ENCODE measurements at regions of chr10 and their contacts with region 1.

Region 1: DNA sequence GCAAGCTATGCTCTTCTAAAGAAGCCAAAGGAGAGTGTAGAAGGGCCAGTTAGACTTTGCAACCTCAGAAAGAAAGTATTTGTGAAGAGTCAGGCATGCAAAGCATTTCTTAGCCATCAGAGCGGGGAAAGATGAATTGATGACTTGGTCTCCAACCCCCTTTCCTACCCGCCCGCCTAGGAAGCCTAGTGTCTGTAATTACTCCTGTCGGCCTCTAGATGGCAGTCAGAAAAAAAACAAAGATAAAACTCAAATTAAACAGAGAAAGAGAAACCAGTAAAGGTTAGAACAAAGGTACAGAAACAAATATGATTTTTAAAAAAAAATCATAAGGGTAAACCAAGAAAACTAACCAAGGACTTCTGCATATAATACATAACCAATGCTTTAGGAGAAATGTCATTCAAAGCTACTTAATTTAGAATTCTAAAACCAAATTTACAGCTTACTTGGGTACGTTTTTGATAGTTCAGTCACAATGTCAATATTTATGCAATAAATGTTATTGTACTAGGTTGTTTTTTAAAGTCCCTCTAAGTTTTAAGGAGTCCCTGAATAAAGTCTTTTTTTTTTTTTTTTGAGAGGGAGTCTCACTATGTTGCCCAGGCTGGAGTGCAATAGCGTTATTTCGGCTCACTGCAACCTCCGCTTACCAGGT is 97.6 kb downstream of the LYZL1 start:
- DNase-seq: no peak
- ATAC-seq: peak in 1 of 4 donors; percentile 47
- H3K4me3 ChIP-seq: no peak overlapping the region
- H3K27ac ChIP-seq: no peak overlapping the region
- H3K4me1 ChIP-seq: no peaks in the 10 kb centered on the region
- H3K27me3 ChIP-seq: peaks cover 0 to 2% (median 0%) of the 10 kb centered on the region in 9 donors
- CTCF ChIP-seq: peak; percentile 71 to 82 (median 76)
- POLR2A ChIP-seq: no peak

Region 2: DNA sequence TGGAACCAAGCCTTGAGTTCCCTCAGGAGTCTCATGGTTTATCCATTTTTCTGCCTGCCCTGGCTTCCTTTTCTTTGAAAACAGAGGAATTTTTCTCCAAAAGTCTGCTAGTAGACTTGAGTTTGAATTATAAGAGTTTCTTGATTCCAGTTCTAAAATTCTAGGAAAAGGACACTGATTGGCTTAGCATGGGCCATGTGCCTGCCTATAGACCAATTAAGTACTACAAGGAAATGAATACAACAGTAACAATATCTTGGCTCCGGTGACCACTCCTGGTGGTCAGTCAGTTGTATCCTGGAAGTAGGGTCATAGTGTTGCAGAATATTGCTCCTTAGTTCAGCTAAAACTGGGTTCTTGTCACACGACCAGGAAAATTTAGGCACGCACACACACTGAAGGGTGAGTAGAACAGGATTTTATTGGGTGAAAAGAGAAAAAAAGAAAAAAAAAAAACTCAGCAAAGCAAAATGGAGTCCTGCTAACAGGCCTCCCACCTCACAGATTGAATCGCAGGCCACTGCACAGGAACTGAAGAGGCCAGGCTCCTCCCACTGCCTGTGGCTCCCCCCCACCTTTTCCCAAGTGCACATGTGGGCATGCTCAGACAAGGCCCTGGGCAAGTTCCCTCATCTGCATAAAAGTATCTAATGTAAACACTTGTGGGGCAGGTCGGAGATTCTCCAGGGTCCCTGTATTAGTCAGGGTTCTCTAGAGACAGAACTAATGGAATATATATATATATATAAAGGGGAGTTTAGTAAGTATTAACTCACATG is 57.5 kb after region 1 on chr10:
- intact Hi-C with region 1: loop called in 7 of 10 experiments (anchors 2 to 10 kb)
- DNase-seq: no peak
- ATAC-seq: no peak
- H3K4me3 ChIP-seq: no peak overlapping the region
- H3K27ac ChIP-seq: no peak overlapping the region
- H3K4me1 ChIP-seq: peaks cover 0 to 19% (median 10%) of the 10 kb centered on the region in 12 donors
- H3K27me3 ChIP-seq: no peaks in the 10 kb centered on the region
- CTCF ChIP-seq: no peak
- POLR2A ChIP-seq: no peak

Region 3: GRCh38 chr10:29451946-29452345 is 65.5 kb after region 1 on chr10:
- intact Hi-C with region 1: loop called in 8 of 10 experiments (anchors 2 to 10 kb)
- DNase-seq: no peak
- ATAC-seq: no peak
- H3K4me3 ChIP-seq: no peak overlapping the region
- H3K27ac ChIP-seq: no peak overlapping the region
- H3K4me1 ChIP-seq: peaks cover 0 to 17% (median 8%) of the 10 kb centered on the region in 12 donors
- H3K27me3 ChIP-seq: no peaks in the 10 kb centered on the region
- CTCF ChIP-seq: no peak
- POLR2A ChIP-seq: no peak

Region 4: GRCh38 chr10:29496341-29497162 is 110.1 kb after region 1 on chr10:
- intact Hi-C with region 1: loop called in 1 of 10 experiments (anchors 2 kb)
- DNase-seq: peak; percentile 63 to 88 (median 65)
- ATAC-seq: peak in 3 of 4 donors; percentile 73 to 81 (median 79)
- H3K4me3 ChIP-seq: no peak overlapping the region
- H3K27ac ChIP-seq: no peak overlapping the region
- H3K4me1 ChIP-seq: peaks cover 0 to 4% (median 0%) of the 10 kb centered on the region in 12 donors
- H3K27me3 ChIP-seq: no peaks in the 10 kb centered on the region
- CTCF ChIP-seq: peak; percentile 81 to 95 (median 90)
- POLR2A ChIP-seq: no peak

Region 5: DNA sequence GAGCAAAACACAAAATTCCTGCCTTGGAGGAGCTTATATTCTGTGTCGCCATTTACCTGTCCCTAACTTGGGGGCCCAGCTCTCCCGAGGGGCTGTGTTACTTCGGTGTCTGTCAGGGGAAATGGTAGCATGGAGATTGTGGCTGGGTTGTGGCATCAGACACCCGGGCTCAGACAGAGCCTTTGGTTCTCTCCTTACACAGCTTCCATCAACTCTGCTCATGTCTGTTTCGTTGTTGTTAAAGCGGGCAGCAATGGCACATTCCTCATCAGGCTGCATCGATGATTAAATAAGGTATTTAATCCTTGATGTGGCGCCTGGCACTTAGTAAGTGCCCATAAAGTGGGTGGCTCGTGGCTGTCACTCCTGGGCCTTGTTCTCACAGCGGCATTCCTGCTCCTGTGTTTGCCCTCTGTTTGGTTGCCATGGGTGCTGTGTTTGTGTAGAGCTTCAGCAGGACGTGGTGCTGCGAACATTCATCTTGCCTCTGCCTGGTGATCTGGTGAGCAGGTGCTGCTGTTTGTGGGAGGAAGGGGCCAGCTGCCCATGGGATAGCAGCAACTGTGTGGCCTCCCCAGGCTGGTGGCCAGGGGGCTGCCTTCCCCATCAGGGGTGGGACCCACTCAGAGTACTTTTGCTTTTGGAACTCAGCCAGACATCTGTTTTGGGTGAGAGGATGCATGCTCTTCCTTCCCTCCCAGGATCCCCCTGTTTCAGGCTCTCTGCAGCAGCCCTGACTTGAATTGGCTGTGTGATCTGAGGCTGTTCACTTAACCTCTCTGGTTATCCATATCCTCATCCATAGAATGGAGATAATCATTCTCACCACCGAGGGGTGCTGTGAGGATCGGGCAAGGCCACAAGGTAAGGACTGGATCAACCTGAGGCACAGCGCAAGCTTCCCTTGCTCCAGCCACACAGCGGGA is 455.5 kb after region 1 on chr10:
- intact Hi-C with region 1: loop called in 1 of 10 experiments (anchors 10 kb)
- DNase-seq: peak in 4 of 5 donors; percentile 75 to 89 (median 82)
- ATAC-seq: peak; percentile 85 to 94 (median 90)
- H3K4me3 ChIP-seq: peak overlapping the region in 2 of 12 donors; percentile 33 to 46
- H3K27ac ChIP-seq: peak overlapping the region in 11 of 12 donors; percentile 48 to 93 (median 79)
- H3K4me1 ChIP-seq: peaks cover 0 to 42% (median 5%) of the 10 kb centered on the region in 12 donors
- H3K27me3 ChIP-seq: no peaks in the 10 kb centered on the region
- CTCF ChIP-seq: no peak
- POLR2A ChIP-seq: peak in 1 of 2 donors; percentile 70

Measured in heart left ventricle (tissue), 16 donors.